ENCODE measurements at regions of chr14 and their contacts with region 1.

Region 1: DNA sequence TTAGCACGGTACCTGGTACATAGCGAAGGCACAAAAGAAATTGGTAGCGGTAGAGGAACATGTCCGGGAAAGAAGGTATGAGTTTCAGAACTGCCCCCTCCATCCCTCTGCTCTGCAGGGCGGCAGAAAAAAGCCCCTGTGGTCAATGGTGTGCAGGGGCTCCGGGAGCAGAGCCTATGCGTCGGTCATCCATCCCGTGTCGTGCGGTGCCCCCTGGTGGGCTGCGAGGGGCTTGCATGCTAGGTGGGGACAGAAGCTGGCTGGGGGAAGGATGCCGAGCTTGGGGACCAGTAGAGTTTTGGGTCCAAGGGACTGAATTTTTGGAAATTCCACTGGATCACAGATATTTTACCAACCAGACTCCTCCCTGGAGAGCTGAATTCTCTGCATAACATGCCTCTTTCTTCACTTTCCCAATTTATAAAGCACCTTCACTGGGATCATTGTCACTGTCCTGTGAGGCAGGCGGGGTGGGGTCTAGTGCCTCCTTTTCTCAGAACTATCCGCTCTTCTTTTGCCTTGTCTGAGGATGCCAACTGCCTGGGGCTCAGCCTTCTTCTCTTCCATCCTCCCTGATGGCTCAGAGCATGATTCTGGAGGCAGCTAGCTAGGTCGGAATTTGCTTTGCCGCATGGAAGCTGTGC is 148.7 kb downstream of the SMOC1 start:
- DNase-seq: peak; percentile 78 to 79
- H3K4me3 ChIP-seq: no peak overlapping the region
- H3K27ac ChIP-seq: no peak overlapping the region
- H3K4me1 ChIP-seq: peaks cover 0 to 7% (median 3%) of the 10 kb centered on the region in 4 donors
- H3K27me3 ChIP-seq: no peaks in the 10 kb centered on the region
- CTCF ChIP-seq: peak; percentile 92 to 96

Region 2: GRCh38 chr14:69818757-69819191 is 209.1 kb before region 1 on chr14:
- intact Hi-C with region 1: loop called (anchors 1 kb)
- DNase-seq: no peak
- H3K4me3 ChIP-seq: no peak overlapping the region
- H3K27ac ChIP-seq: no peak overlapping the region
- H3K4me1 ChIP-seq: no peaks in the 10 kb centered on the region
- H3K27me3 ChIP-seq: peaks cover 0 to 26% of the 10 kb centered on the region in 2 donors
- CTCF ChIP-seq: peak; percentile 91

Region 3: GRCh38 chr14:69863083-69863482 is 164.8 kb before region 1 on chr14:
- intact Hi-C with region 1: loop called (anchors 10 kb)
- DNase-seq: no peak
- H3K4me3 ChIP-seq: no peak overlapping the region
- H3K27ac ChIP-seq: no peak overlapping the region
- H3K4me1 ChIP-seq: no peaks in the 10 kb centered on the region
- H3K27me3 ChIP-seq: peaks cover 0 to 5% of the 10 kb centered on the region in 2 donors
- CTCF ChIP-seq: peak in 1 of 2 experiments; percentile 29

Measured in tibial artery (tissue), 4 donors.